ENCODE measurements at regions of chr1 and their contacts with region 1.

Region 1: DNA sequence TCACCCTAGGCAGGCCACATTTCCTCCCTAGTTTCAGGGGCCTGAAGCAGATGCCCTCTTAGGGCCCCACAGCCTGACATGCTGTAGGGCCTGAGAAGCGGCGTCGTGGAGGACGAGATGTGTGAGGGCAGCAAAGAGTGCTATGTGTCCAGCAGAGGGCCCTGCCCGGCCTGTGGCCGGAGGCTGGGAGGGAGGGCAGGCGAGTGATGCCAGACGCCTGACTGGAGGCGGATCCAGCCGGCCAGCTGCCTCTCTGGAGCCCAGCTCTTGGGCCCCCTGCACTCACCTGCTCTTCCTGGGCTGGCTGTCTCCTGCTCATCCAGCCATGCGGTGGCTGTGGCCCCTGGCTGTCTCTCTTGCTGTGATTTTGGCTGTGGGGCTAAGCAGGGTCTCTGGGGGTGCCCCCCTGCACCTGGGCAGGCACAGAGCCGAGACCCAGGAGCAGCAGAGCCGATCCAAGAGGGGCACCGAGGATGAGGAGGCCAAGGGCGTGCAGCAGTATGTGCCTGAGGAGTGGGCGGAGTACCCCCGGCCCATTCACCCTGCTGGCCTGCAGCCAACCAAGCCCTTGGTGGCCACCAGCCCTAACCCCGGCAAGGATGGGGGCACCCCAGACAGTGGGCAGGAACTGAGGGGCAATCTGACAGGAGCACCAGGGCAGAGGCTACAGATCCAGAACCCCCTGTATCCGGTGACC is at the start of gene GPR37L1:
- DNase-seq: peak; percentile 71
- H3K4me3 ChIP-seq: no peak within 1 kb of the TSS
- H3K4me3 Mint-ChIP-seq: no peak within 1 kb of the TSS
- H3K27ac Mint-ChIP-seq: no peak within 1 kb of the TSS
- H3K4me1 ChIP-seq: peaks cover 16% of the 10 kb centered on the region
- H3K4me1 Mint-ChIP-seq: no peaks in the 10 kb centered on the region
- H3K27me3 ChIP-seq: no peaks in the 10 kb centered on the region
- H3K27me3 Mint-ChIP-seq: no peaks in the 10 kb centered on the region
- CTCF ChIP-seq: peak; percentile 56 to 75
- total RNA-seq, gene GPR37L1: 0.07 TPM in 2 replicates

Region 2: GRCh38 chr1:202135221-202135721 is 12.5 kb after region 1 on chr1:
- CTCF ChIA-PET with region 1: interaction called, 12 read pairs
- POLR2A ChIA-PET with region 1: interaction called, 3 read pairs
- intact Hi-C with region 1: loop called (anchors 1 kb)
- DNase-seq: peak; percentile 66 to 69
- H3K4me3 ChIP-seq: no peak overlapping the region
- H3K4me3 Mint-ChIP-seq: no peak overlapping the region
- H3K27ac Mint-ChIP-seq: no peak overlapping the region
- H3K4me1 ChIP-seq: peaks cover 21% of the 10 kb centered on the region
- H3K4me1 Mint-ChIP-seq: no peaks in the 10 kb centered on the region
- H3K27me3 ChIP-seq: no peaks in the 10 kb centered on the region
- H3K27me3 Mint-ChIP-seq: no peaks in the 10 kb centered on the region
- CTCF ChIP-seq: peak; percentile 85 to 89

Region 3: DNA sequence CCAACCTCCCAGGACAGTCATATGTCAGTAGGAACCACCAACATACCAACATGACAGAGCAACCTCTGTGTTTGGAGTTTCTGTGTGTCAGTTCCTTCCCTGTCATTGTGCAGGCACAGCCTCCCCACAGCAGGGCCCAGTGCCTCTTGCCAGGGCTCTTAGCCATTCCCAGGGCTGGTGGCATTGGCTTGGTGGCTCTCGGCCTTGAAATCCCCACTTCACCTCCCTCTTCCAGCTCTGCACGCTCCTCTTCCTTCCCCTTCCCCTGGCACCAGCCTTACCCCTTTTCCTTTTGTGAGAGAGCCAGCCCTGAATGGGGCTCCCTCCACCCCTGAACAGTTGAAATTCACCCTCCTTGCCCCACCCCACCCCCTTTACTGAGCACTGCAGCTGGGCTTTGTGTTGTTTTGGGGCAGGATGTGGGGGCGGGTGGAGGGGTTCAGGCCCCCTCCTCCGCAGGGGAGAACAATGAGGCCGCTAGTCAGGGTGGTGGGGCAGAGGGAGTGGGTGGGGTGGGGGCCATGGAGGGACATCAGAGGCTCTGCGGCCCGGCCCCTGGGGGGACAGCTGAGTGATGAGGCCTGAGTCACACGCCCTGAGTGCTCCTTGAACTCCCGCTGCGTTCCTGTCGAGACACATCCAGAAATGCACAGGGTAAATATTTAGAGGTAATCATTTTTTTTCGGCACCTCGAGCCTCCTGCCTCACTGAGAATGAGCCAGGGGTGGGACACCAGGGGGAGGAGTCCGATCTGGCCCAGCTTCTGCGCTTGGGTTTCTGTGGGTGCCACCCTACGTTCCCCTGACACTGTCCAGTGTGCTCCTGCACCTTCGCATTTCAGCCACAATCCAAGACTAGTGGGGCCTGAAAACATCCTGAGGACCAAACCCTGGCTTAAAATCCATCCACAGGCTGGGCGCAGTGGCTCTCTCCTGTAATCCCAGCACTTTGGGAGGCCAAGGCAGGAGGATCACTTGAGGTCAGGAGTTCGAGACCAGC is 99.4 kb after region 1 on chr1:
- CTCF ChIA-PET with region 1: no interaction called
- POLR2A ChIA-PET with region 1: no interaction called
- intact Hi-C with region 1: no loop called
- DNase-seq: peak; percentile 57 to 79
- H3K4me3 ChIP-seq: no peak overlapping the region
- H3K4me3 Mint-ChIP-seq: no peak overlapping the region
- H3K27ac Mint-ChIP-seq: peak overlapping the region; percentile 5
- H3K4me1 ChIP-seq: peaks cover 32% of the 10 kb centered on the region
- H3K4me1 Mint-ChIP-seq: peaks cover 13% of the 10 kb centered on the region
- H3K27me3 ChIP-seq: no peaks in the 10 kb centered on the region
- H3K27me3 Mint-ChIP-seq: no peaks in the 10 kb centered on the region
- CTCF ChIP-seq: no peak